HEK293T (cell line): ENCODE measurements at regions of chr17 and their contacts with region 1.

Region 1: GRCh38 chr17:13017659-13018459 is at the start of gene ELAC2:
- DNase-seq: peak; percentile 94

Region 2: GRCh38 chr17:12646761-12647422 is 371.0 kb before region 1 on chr17:
- CTCF ChIA-PET with region 1: no interaction called
- POLR2A ChIA-PET with region 1: no interaction called
- DNase-seq: no peak

Region 3: DNA sequence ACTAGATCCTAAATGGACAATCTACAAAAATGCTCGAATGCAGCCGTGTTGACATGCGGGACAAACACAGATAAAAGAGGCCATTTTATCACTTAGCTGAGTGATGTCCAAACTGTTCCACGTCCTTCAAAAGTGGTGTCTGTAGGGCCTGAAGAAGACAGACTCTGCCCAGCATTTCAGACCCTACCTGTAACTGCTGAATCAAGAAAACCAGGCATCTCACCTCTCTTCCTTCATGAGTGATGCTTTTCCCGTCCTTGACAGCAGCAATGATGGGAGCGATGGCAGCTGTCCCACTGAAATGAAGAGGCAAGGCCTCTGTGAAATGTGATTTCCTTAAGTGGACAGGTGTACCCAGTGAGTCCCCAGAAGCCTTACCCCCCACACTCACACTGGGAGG is 12.3 kb before region 1 on chr17:
- CTCF ChIA-PET with region 1: interaction called, 5 read pairs
- POLR2A ChIA-PET with region 1: interaction called, 14 read pairs
- DNase-seq: no peak

Region 4: DNA sequence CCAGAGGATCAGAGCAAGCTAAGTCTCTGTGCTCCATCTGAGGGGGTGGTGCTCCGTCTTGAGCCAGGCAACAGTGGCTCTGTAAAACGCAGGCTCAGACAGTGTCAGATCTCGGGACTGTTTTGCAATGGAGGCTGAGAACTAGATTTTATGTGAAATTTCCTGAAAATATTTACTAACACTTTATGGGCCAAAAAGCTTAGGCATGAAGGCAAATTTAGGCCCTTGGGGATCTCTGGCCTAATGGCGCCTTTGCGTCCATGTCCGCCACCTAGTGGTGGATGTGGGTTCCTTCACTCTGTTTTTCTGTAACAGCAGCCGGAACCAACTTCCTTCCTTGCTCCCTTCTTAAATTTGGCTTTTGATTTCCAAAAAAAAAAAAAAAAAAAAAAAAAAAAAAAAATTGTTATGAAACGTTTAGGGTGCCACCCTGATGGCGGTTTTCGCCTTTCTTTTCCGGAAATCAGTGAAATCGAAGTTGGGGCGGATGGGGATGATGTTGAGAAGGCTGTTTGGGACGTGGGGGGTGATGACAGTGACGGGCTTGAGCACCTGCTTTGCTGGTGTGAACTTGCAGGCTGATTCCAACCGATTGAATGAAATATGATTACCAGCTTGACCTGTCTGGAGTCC is 14.0 kb after region 1 on chr17:
- CTCF ChIA-PET with region 1: interaction called, 10 read pairs
- POLR2A ChIA-PET with region 1: interaction called, 14 read pairs
- DNase-seq: peak; percentile 68

Region 5: DNA sequence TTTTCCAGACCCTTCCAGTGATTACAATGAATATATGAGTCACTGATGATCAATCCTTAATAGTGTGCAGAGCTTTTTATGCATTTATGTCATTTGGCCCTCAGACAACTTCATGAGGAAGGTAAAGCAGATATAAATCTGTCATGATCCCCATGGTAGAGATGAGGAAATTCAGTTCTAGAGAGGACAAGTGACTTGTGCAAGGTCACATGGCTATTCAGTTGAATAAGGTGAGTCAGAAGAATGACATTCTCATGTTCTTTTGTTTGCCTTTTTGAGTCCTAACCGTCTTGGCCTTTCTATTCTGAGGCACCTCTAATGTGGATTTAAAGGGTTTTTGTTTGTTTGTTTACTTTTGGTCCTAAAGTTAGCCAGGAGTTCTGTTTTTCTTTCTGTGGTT is 116.2 kb after region 1 on chr17:
- CTCF ChIA-PET with region 1: no interaction called
- POLR2A ChIA-PET with region 1: no interaction called
- DNase-seq: no peak